Activated CD4-positive, alpha-beta T cell treated with anti-CD3 and anti-CD28 coated beads for 36 hours (primary cell): ENCODE measurements at regions of chr18 and their contacts with region 1.

Region 1: DNA sequence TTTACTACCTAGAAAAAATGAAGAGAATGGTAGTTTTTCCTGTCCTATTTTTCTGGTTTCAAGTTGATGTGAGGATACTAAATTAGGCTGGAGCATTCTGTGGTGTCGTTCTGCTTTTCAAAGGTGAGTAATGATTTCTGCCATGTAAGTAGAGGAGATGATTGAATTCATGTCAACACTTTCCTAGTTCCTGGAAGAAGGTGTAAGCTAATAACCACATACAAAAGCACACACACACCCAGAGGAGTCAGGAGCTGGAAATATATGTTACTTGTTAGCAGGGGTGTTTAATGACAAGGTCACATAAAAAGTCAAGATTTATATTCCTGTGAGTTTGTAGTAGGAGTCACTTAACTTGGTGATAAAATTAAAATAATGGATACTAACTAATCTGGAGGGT is 172.1 kb downstream of the TMX3 start:
- DNase-seq: no peak
- ATAC-seq: no peak
- H3K4me3 Mint-ChIP-seq: no peak overlapping the region
- H3K27ac Mint-ChIP-seq: no peak overlapping the region
- H3K4me1 Mint-ChIP-seq: no peaks in the 10 kb centered on the region
- H3K27me3 Mint-ChIP-seq: no peaks in the 10 kb centered on the region

Region 2: GRCh38 chr18:68489018-68489792 is 53.6 kb before region 1 on chr18:
- CTCF ChIA-PET with region 1: no interaction called
- POLR2A ChIA-PET with region 1: interaction called, 11 read pairs
- intact Hi-C with region 1: no loop called
- DNase-seq: no peak
- ATAC-seq: no peak
- H3K4me3 Mint-ChIP-seq: no peak overlapping the region
- H3K27ac Mint-ChIP-seq: no peak overlapping the region
- H3K4me1 Mint-ChIP-seq: no peaks in the 10 kb centered on the region
- H3K27me3 Mint-ChIP-seq: no peaks in the 10 kb centered on the region

Region 3: DNA sequence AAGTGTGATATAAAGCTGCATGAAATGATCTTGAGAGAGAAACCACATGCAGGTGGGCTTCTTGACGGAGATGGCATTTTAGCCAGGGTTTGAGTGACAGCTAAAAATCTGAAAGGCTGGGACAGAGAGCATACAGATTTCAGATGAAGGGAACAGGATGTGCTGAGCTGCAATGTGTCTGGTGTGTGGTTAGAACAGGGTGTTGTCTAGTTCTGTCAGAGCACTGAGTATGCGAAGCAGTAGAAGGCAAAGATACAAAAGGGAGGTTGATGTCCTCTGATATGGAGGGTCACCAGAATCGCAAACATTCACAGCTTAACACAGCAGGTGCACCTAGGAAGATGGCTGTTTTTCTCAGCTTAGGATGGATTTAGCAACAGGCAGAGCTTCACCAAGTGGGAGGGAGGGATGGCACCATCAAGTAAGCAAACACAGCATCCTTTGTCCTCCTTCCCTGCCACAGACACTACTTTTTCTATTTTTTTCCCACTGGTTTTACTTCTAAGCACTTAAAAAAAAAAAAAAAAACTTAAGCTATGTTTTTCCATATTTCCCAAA is 10.4 kb before region 1 on chr18:
- CTCF ChIA-PET with region 1: no interaction called
- POLR2A ChIA-PET with region 1: no interaction called
- intact Hi-C with region 1: no loop called
- DNase-seq: no peak
- ATAC-seq: no peak
- H3K4me3 Mint-ChIP-seq: no peak overlapping the region
- H3K27ac Mint-ChIP-seq: no peak overlapping the region
- H3K4me1 Mint-ChIP-seq: no peaks in the 10 kb centered on the region
- H3K27me3 Mint-ChIP-seq: no peaks in the 10 kb centered on the region

Region 4: DNA sequence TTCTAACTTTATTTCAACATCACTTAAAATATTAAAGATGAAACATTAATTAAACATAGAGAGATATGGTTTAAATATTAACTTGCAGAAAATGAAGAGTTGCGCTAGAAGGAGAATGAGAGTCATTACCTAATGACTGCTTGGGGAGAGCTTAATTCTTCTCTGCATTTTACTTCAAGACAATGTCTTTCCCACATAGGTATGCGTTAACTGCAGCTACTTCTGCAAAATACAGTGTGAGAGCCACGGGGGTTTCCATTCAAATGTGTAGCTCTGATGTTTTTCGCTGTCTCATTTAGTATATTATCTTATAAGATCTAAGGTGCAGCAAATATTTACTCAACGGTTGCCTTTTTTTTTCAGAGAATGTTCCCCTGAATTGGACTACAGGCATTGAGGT is 45.3 kb after region 1 on chr18:
- CTCF ChIA-PET with region 1: no interaction called
- POLR2A ChIA-PET with region 1: no interaction called
- intact Hi-C with region 1: no loop called
- DNase-seq: no peak
- ATAC-seq: no peak
- H3K4me3 Mint-ChIP-seq: no peak overlapping the region
- H3K27ac Mint-ChIP-seq: no peak overlapping the region
- H3K4me1 Mint-ChIP-seq: no peaks in the 10 kb centered on the region
- H3K27me3 Mint-ChIP-seq: peaks cover 1% of the 10 kb centered on the region

Region 5: DNA sequence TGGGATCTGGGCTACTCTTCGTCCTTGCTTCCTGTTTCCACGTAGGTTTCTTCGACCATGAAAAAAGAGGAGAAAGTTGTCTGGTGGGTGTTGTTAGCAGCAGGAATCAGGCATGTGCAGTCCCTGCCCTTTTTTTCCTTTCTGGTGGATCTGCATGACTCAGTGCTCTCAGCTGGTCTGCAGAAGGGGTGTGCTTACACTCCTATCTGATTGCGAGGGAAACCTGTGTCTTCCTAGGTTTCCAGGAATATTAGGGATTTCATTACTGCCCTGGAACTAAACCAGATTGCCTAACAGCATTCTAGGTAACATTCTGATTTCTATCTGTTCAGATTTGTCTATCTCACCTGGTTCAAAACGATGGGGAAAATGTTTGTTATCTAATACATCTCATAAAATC is 429.3 kb after region 1 on chr18:
- CTCF ChIA-PET with region 1: no interaction called
- POLR2A ChIA-PET with region 1: no interaction called
- intact Hi-C with region 1: no loop called
- DNase-seq: no peak
- ATAC-seq: no peak
- H3K4me3 Mint-ChIP-seq: no peak overlapping the region
- H3K27ac Mint-ChIP-seq: no peak overlapping the region
- H3K4me1 Mint-ChIP-seq: no peaks in the 10 kb centered on the region
- H3K27me3 Mint-ChIP-seq: no peaks in the 10 kb centered on the region